Heart left ventricle (tissue), 16 donors: ENCODE measurements at regions of chr11 and their contacts with region 1.

Region 1: GRCh38 chr11:14773755-14774154 is 118.3 kb downstream of the CYP2R1 start:
- DNase-seq: no peak
- ATAC-seq: no peak
- H3K4me3 ChIP-seq: no peak overlapping the region
- H3K27ac ChIP-seq: no peak overlapping the region
- H3K4me1 ChIP-seq: peaks cover 0 to 7% (median 0%) of the 10 kb centered on the region in 12 donors
- H3K27me3 ChIP-seq: no peaks in the 10 kb centered on the region
- CTCF ChIP-seq: peak in 3 of 12 donors; percentile 10 to 15 (median 12)
- POLR2A ChIP-seq: no peak

Region 2: DNA sequence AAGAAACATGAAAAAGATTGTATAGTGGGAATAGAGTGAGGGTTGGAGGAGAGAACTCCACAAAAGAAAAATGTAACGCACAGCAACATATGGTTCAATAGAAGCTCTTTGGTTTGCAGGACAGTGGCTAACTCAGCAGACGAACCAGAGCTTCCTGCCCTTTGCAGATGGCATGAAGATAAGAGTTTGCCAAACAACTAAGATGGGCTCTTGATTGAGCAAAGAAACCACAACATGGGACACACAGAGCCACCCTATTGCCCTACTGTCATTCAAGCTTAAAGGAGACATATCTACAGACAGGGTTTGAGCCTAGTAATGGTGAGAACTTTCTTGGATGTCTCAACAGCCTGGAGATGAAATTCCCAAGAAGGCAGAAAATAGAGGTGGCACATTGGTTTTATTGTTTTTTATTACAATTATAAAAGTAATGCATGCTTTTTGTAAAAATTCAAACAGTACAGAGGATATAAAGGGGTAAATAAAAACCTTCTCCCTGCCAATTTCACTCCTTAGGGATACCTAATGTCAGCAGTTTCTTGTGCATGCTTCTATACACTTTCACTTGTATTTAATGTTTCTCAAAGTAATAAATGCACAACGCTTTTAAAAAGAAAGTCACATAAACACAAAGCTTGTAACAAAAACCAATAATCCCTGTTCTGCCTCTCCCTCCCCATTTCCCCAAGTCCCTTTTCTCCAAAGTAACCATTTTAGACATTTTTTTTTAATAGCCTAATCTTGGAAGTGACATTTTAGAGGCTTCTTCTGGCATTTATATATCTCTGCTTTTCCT is 337.8 kb before region 1 on chr11:
- intact Hi-C with region 1: no loop called
- DNase-seq: no peak
- ATAC-seq: no peak
- H3K4me3 ChIP-seq: no peak overlapping the region
- H3K27ac ChIP-seq: no peak overlapping the region
- H3K4me1 ChIP-seq: no peaks in the 10 kb centered on the region
- H3K27me3 ChIP-seq: no peaks in the 10 kb centered on the region
- CTCF ChIP-seq: no peak
- POLR2A ChIP-seq: no peak

Region 3: DNA sequence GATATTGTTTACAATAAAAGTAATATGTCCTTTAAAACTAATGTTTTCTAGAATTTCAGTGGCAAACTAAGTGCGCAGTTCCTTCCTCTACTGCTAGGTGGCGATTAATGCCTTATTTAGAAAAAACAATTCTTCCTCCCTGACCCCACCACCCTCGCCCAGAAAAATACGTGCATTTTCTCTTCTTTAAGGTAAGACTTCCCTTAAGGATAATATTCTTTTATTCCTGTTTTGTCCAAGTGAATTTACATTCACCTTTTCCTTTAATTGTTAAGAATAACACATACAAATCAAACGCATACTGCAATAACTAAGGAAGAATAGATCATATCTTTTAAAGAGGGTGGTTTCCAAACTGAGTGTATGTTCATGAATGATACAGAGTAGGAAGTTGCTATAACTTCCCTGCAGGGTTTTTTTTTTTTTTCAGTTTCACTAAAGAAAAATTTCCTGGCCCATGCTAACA is 236.6 kb before region 1 on chr11:
- intact Hi-C with region 1: loop called in 2 of 10 experiments (anchors 10 kb)
- DNase-seq: no peak
- ATAC-seq: no peak
- H3K4me3 ChIP-seq: peak overlapping the region in 1 of 12 donors; percentile 23
- H3K27ac ChIP-seq: peak overlapping the region in 4 of 12 donors; percentile 42 to 74 (median 54)
- H3K4me1 ChIP-seq: peaks cover 0 to 45% (median 29%) of the 10 kb centered on the region in 12 donors
- H3K27me3 ChIP-seq: no peaks in the 10 kb centered on the region
- CTCF ChIP-seq: peak; percentile 66 to 86 (median 78)
- POLR2A ChIP-seq: no peak